GM10248 (cell line): ENCODE measurements at regions of chr9 and their contacts with region 1.

Region 1: GRCh38 chr9:130290291-130291181 is 25.0 kb downstream of the HMCN2 start:
- DNase-seq: no peak
- CTCF ChIP-seq: no peak

Region 2: DNA sequence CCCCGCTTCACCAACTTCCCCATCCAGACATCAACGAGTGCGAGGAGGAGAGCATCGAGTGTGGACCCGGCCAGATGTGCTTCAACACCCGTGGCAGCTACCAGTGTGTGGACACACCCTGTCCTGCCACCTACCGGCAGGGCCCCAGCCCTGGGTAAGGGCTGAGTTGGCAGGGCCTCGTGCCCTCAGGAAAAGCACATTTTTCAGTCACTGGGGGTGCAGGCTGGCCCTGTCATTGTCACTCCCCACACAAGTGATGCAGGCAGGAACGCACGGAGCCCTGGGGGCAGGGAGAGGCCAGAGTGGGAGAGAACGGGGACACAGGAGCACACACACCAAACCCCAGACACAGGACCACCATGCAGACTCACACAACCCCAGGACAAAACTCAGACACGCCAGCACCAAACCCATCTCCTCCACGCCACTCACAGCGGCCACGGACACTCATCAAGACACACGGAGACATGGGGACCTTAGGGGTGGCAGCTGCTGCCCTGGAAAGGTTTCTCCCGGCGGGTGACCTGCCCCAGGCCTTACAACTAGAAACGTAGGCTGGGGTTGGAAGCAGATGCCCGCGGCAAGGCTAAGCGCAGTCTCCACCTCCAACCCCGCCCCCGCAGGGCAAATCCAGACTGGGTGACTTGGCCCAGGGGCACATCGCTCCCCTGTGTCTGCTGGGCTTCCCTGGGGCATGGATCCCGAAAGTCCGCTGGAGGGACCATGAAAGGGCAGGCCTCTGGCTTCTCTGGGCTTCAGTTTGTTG is 142.0 kb after region 1 on chr9:
- CTCF ChIA-PET with region 1: no interaction called
- POLR2A ChIA-PET with region 1: interaction called, 10 read pairs
- DNase-seq: no peak
- CTCF ChIP-seq: no peak